ENCODE measurements at regions of chr1 and their contacts with region 1.

Region 1: DNA sequence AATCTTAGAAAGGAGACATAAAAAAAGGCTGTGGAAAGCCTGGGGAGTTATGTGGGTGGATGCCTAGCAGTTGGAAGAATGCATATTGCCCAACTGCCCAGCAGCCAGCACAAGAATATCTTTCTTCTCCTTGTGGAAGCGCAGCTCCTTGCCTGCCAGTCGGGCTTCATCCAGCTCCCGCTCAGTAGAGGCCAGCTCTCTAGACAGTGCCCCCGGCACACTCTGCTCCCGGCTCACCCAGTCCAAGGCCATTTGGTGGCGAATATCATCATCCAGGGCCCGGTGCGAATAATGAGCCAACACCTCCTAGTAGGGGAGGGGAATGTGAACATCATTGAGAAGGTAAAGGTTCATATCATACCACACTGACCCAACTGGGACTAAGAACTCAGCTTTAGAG is 9.0 kb upstream of the RBM8A start:
- DNase-seq: no peak
- H3K4me3 ChIP-seq: no peak overlapping the region
- H3K27ac ChIP-seq: no peak overlapping the region
- H3K4me1 ChIP-seq: peaks cover 5% of the 10 kb centered on the region
- H3K27me3 ChIP-seq: no peaks in the 10 kb centered on the region
- CTCF ChIP-seq: no peak

Region 2: GRCh38 chr1:145985502-145986439 is 49.5 kb after region 1 on chr1:
- CTCF ChIA-PET with region 1: interaction called, 12 read pairs
- dilution Hi-C with region 1: no loop called
- in situ Hi-C with region 1: no loop called
- intact Hi-C with region 1: no loop called
- DNase-seq: peak; percentile 46
- H3K4me3 ChIP-seq: no peak overlapping the region
- H3K27ac ChIP-seq: peak overlapping the region; percentile 42
- H3K4me1 ChIP-seq: peaks cover 26% of the 10 kb centered on the region
- H3K27me3 ChIP-seq: no peaks in the 10 kb centered on the region
- CTCF ChIP-seq: no peak